ENCODE measurements at regions of chr7 and their contacts with region 1.

Region 1: GRCh38 chr7:50092579-50093491 is at the start of gene ZPBP:
- DNase-seq: peak in 4 of 5 donors; percentile 10 to 66 (median 24)
- ATAC-seq: peak in 2 of 4 donors; percentile 22 to 38
- H3K4me3 ChIP-seq: peak within 1 kb of the TSS; percentile 22 to 58 (median 46)
- H3K27ac ChIP-seq: no peak within 1 kb of the TSS
- H3K4me1 ChIP-seq: peaks cover 0 to 6% (median 0%) of the 10 kb centered on the region in 12 donors
- H3K27me3 ChIP-seq: peaks cover 0 to 17% (median 0%) of the 10 kb centered on the region in 9 donors
- CTCF ChIP-seq: peak; percentile 55 to 80 (median 70)
- POLR2A ChIP-seq: no peak
- total RNA-seq, gene ZPBP: not detected

Region 2: DNA sequence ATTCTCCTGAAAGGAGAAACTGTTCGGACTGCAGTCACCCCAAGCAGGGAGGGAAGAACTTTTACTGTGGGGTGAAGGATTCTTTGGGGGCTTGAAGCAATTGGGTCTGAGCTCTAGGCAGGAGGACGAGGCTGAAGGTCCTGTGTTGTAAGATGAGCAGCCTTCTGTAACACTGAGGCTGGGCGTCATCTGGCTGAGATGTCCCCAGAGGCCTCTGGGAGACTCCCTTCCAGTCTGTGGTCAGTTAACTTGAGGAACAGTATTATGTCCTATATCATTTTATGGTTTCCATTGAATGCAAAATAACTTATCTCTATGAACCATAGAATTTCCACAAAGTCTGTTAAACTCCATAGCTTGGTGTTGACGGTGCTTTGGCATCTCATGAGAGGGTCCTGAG is 331.0 kb after region 1 on chr7:
- intact Hi-C with region 1: loop called in 4 of 10 experiments (anchors 5 kb)
- DNase-seq: no peak
- ATAC-seq: no peak
- H3K4me3 ChIP-seq: no peak overlapping the region
- H3K27ac ChIP-seq: no peak overlapping the region
- H3K4me1 ChIP-seq: no peaks in the 10 kb centered on the region
- H3K27me3 ChIP-seq: no peaks in the 10 kb centered on the region
- CTCF ChIP-seq: no peak
- POLR2A ChIP-seq: no peak

Region 3: DNA sequence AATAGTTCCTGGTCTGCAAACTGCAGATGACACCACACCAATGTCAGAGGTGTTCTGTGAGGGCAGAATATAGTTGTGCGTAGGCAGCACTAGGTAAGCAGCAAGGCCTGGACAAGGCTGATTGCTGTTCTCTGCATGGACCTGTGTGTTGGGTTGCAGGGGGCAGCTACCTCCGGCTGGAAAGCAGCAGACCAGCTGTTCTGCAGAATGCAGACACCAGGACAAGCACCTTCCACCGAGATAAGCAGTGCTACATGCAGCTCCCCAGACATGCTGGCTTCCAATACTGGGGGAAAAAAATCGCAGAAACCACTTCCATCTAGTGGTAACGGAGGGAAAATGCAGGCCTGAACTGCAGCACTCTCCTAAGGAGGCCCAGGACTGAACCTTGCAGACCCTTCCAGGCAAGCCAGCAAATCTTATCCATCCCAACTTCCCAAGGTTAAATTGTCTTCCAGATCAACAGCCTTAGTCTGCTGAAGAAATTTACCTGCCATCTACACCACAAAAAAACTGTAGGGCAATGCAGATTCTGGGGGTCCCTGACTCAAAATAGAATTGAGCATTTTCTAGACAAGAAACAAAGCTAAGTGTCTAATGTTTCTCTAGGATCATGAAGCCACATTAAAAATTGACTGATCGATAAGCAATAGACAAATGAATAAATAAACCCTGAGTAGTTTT is 1274.2 kb after region 1 on chr7:
- intact Hi-C with region 1: loop called in 2 of 10 experiments (anchors 5 to 10 kb)
- DNase-seq: peak in 3 of 5 donors; percentile 26 to 36 (median 36)
- ATAC-seq: peak; percentile 71 to 94 (median 85)
- H3K4me3 ChIP-seq: no peak overlapping the region
- H3K27ac ChIP-seq: no peak overlapping the region
- H3K4me1 ChIP-seq: no peaks in the 10 kb centered on the region
- H3K27me3 ChIP-seq: no peaks in the 10 kb centered on the region
- CTCF ChIP-seq: peak; percentile 36 to 77 (median 64)
- POLR2A ChIP-seq: no peak